Naive thymus-derived CD4-positive, alpha-beta T cell (primary cell): ENCODE measurements at regions of chr17 and their contacts with region 1.

Region 1: GRCh38 chr17:59202320-59202719 is 7.5 kb upstream of the SMG8 start:
- DNase-seq: no peak
- ATAC-seq: no peak
- H3K4me3 ChIP-seq: no peak overlapping the region
- H3K4me3 Mint-ChIP-seq: no peak overlapping the region
- H3K27ac ChIP-seq: no peak overlapping the region
- H3K27ac Mint-ChIP-seq: no peak overlapping the region
- H3K4me1 ChIP-seq: no peaks in the 10 kb centered on the region
- H3K4me1 Mint-ChIP-seq: no peaks in the 10 kb centered on the region
- H3K27me3 ChIP-seq: no peaks in the 10 kb centered on the region
- H3K27me3 Mint-ChIP-seq: no peaks in the 10 kb centered on the region

Region 2: DNA sequence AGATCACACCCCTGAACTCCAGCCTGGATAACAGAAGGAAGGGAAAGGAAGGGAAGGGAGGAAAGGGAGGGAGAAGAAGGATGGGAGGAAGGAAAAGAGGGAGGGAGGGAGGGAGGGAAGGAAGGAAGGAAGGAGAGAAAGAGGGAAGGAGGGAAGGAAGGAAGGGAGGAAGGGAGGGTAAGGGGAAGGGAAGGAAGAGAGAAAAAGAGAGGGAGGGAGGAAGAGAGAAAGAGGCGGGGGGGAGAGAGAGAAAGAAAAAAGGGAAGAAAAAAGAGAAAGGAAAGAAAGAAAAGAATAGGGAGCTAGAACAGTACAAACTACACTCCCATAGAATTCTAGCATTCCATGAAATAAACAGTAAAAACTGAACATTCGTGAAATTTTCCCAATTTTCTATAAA is 72.5 kb before region 1 on chr17:
- CTCF ChIA-PET with region 1: no interaction called
- POLR2A ChIA-PET with region 1: interaction called, 11 read pairs
- intact Hi-C with region 1: no loop called
- DNase-seq: no peak
- ATAC-seq: no peak
- H3K4me3 ChIP-seq: no peak overlapping the region
- H3K4me3 Mint-ChIP-seq: no peak overlapping the region
- H3K27ac ChIP-seq: no peak overlapping the region
- H3K27ac Mint-ChIP-seq: no peak overlapping the region
- H3K4me1 ChIP-seq: no peaks in the 10 kb centered on the region
- H3K4me1 Mint-ChIP-seq: peaks cover 0 to 14% (median 5%) of the 10 kb centered on the region in 7 donors
- H3K27me3 ChIP-seq: no peaks in the 10 kb centered on the region
- H3K27me3 Mint-ChIP-seq: no peaks in the 10 kb centered on the region